Dendritic cell treated with granulocyte-macrophage colony-stimulating factor and Interleukin-4, amounts not matched to agents 40 ng/mL and 50 ng/mL, for 4 days (primary cell): ENCODE measurements at regions of chr3 and their contacts with region 1.

Region 1: GRCh38 chr3:179929091-179929529 is 107.6 kb downstream of the PEX5L start:
- H3K4me3 Mint-ChIP-seq: no peak overlapping the region
- H3K27ac Mint-ChIP-seq: no peak overlapping the region
- H3K4me1 Mint-ChIP-seq: no peaks in the 10 kb centered on the region
- H3K27me3 Mint-ChIP-seq: peaks cover 8% of the 10 kb centered on the region

Region 2: GRCh38 chr3:179005706-179006105 is 923.4 kb before region 1 on chr3:
- intact Hi-C with region 1: no loop called
- H3K4me3 Mint-ChIP-seq: no peak overlapping the region
- H3K27ac Mint-ChIP-seq: no peak overlapping the region
- H3K4me1 Mint-ChIP-seq: no peaks in the 10 kb centered on the region
- H3K27me3 Mint-ChIP-seq: no peaks in the 10 kb centered on the region

Region 3: GRCh38 chr3:181176601-181177000 is 1247.5 kb after region 1 on chr3:
- intact Hi-C with region 1: loop called (anchors 10 kb)
- H3K4me3 Mint-ChIP-seq: no peak overlapping the region
- H3K27ac Mint-ChIP-seq: no peak overlapping the region
- H3K4me1 Mint-ChIP-seq: no peaks in the 10 kb centered on the region
- H3K27me3 Mint-ChIP-seq: no peaks in the 10 kb centered on the region